ENCODE measurements at regions of chr4 and their contacts with region 1.

Region 1: GRCh38 chr4:42865572-42866189 is 26.8 kb upstream of the GRXCR1 start:
- DNase-seq: no peak
- H3K4me3 ChIP-seq: no peak overlapping the region
- H3K27ac ChIP-seq: no peak overlapping the region
- H3K4me1 ChIP-seq: no peaks in the 10 kb centered on the region
- H3K27me3 ChIP-seq: peaks cover 0 to 14% (median 0%) of the 10 kb centered on the region in 4 donors
- CTCF ChIP-seq: peak; percentile 50 to 74 (median 64)
- POLR2A ChIP-seq: no peak

Region 2: DNA sequence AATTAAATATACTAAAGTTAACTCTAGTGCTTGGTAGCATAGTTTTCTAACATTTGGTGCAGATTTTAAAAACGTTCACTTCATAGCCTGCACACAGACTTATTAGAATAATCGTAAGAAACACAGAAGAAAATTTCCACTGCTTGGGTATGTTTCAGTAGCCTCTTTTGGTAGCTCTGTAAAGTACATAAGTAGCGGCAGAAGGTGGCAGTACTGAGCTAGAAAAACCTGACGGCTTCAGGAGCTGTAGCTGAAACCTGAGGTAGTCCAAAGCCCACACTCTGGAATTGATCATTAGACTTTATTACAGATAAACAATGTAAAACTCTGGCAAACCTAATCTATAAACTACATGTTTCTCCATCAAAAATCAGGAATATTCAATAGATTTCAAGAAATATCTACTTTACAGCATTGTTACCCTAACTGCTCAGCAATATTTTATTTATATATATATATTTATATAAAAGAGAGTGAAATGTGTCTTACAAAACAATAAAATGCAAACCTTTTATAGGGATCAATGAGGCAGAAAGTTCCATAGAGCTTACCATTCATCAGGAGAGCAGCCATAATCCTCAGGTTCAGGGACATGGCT is 297.0 kb before region 1 on chr4:
- intact Hi-C with region 1: loop called (anchors 5 kb)
- DNase-seq: no peak
- H3K4me3 ChIP-seq: no peak overlapping the region
- H3K27ac ChIP-seq: no peak overlapping the region
- H3K4me1 ChIP-seq: peaks cover 0 to 11% (median 0%) of the 10 kb centered on the region in 3 donors
- H3K27me3 ChIP-seq: no peaks in the 10 kb centered on the region
- CTCF ChIP-seq: peak; percentile 60 to 70 (median 63)
- POLR2A ChIP-seq: no peak

Measured in esophagus squamous epithelium (tissue), 5 donors.